ENCODE measurements at regions of chr4 and their contacts with region 1.

Region 1: GRCh38 chr4:78056265-78057129 is 626 bp upstream of the FRAS1 start:
- DNase-seq: peak; percentile 87

Region 2: GRCh38 chr4:77819843-77820648 is 236.5 kb before region 1 on chr4:
- intact Hi-C with region 1: loop called (anchors 10 kb)
- DNase-seq: peak; percentile 98

Region 3: DNA sequence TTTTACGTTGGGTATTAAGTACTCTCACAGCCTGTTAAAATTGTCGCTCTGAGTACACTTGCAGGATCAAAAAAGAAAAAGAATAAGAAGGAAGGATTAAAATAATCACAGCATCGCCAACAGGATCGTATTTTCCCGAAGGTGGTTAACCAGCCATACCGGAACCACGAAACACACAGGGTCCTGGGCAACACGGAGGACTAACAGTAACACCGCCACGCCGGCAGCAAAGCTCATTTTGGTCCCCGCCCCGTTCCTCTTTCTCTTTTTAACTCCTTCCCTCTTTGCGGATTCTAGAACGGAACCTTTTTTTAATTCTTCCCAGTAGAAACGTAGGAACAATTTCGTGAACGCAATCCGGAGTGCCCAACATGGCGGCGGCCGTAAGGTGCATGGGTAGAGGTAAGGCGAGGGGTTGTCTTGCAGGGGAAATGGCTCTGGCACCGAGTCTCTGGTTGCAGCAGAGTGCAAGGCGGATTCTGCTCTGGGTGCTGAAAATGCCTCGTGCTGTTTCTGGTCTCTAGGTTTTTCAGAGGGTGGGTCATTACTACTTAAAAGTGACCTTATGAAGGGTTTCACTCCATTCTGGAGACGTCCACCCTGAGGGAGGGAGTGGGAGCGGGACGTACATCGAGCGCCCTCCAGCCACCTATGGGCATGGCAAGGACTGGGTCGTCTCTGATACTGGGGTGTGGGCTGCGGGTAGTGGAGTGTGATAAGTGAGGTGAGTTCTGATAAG is 193.8 kb before region 1 on chr4 and contains the start of gene MRPL1:
- intact Hi-C with region 1: loop called (anchors 5 kb)
- DNase-seq: peak; percentile 95
- total RNA-seq, gene MRPL1: 29.0 TPM

Region 4: DNA sequence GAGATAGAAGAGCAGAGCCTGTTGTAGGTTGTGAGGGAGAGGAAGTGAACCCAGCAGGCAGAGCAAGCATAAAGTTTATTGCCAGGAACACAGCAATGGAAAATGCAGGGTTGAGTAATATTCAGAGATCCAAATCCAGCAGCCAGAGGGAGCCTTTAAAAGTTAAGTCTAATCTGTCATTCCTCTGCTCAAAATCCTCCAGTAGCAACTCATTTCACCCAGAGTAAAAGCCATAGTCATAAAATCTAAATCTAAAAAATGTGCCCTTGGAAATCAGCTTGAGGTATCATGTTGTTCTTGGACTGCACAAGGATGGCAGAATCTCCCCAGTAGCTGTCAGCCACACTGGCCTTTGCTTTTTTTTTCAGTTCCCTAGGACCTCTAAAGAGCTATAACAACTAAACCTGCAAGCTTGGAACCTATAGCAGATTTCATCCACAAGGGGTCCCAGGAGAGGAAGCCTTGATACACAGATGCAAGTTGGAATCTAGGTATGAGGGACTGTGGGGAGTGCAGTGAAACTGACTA is 62.2 kb before region 1 on chr4:
- intact Hi-C with region 1: loop called (anchors 5 kb)
- DNase-seq: no peak

Region 5: GRCh38 chr4:78293821-78294301 is 237.4 kb after region 1 on chr4:
- intact Hi-C with region 1: loop called (anchors 5 kb)
- DNase-seq: no peak

Region 6: DNA sequence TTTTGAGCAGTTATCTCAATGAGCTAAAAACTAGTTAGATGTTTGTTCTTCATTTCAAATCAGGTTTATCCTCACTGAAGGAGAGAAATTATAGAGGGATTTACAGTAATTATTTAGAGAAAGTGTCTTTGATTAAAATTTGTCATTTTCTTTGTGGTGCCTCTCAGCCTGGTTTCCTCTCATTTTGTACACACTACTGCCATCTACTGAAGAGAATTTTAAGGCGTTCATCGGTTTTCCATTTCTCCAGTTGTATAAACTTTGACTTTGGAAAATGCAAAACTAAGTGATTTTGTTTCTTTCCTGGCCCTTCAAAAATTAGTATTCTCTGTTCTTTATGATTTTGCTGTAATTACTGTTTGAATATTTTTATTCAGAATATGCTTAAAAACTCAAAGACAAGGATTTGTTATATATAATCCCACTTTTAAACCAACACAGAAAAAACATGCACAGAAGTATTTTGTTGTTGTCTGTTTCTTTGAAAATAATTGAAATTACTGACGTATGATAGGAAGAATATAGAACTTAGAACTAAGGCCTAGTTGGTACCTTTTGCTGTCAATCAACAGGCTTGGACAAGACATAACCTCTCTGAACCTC is 460.7 kb after region 1 on chr4:
- intact Hi-C with region 1: loop called (anchors 2 kb)
- DNase-seq: no peak

Region 7: GRCh38 chr4:78775303-78776030 is 719.0 kb after region 1 on chr4:
- intact Hi-C with region 1: loop called (anchors 5 kb)
- DNase-seq: peak; percentile 94

Measured in cardiac septum (tissue), 1 donor.